Activated CD4-positive, alpha-beta T cell treated with anti-CD3 and anti-CD28 coated beads for 36 hours (primary cell): ENCODE measurements at regions of chr7 and their contacts with region 1.

Region 1: DNA sequence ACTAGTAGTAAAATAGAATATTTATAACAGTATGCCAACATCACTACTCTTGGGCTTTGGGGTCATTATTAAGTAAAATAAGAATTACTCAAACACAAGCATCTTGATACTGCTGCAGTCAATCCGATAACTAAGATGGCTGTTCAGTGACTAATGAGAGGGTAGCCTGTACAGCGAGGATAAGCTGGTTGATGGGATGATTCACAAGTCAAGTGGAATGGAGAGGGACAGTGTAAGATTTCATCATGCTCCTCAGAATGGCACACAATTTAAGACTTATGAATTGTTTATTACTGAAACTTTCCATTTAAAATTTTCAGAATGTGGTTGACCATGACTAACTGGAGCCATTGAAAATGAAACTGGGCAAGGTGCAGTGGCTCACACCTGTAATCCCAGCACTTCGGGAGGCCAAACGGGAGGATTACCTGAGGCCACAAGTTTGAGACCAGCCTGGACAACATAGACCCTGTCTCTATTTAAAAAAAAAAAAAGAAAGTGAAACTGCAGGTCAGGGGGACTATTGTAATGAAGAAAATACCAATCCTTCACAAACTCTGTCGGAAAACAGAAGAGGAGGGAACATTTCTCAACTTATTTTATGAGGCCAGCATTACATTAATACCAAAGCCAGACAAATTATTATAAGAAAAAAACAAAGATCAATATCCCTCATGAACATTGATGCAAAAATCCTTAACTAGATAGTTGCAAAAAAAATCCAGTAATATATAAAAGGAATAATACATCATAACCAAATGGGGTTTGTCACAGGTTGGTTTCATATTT is 11.2 kb downstream of the AVL9 start:
- DNase-seq: peak; percentile 54
- ATAC-seq: peak; percentile 88
- H3K4me3 Mint-ChIP-seq: peak overlapping the region; percentile 17
- H3K27ac Mint-ChIP-seq: peak overlapping the region; percentile 88
- H3K4me1 Mint-ChIP-seq: peaks cover 60% of the 10 kb centered on the region
- H3K27me3 Mint-ChIP-seq: no peaks in the 10 kb centered on the region

Region 2: DNA sequence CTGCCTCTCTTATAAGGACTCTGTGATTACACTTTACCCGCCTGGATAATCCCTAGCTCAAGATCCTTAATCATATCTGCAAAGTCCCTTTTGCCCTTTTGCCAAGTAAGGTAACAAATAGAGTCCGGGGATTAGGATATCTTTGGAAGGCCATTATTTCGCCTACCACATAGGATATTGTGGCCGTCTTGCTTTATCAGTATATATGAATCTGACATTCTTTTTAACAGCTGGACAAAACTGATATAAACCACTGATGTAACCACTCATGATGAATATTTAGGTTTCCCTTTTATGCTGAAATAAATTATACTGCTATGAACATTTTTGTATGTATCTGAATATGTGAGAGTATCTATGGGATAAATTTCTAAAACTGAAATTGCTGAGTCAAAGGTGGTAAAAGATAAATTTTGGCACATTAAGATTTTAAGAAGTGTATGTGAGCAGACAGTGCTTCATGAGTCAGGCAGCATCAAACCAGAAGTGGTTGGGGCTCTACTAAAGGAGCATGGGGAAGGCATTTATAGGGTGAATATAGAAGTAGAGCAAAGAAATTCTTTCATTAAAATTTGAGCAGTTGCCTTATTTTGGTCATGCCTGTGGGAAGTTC is 33.6 kb after region 1 on chr7:
- CTCF ChIA-PET with region 1: no interaction called
- POLR2A ChIA-PET with region 1: no interaction called
- intact Hi-C with region 1: loop called in 1 of 2 experiments (anchors 1 kb)
- DNase-seq: peak; percentile 10
- ATAC-seq: peak; percentile 91
- H3K4me3 Mint-ChIP-seq: no peak overlapping the region
- H3K27ac Mint-ChIP-seq: no peak overlapping the region
- H3K4me1 Mint-ChIP-seq: peaks cover 27% of the 10 kb centered on the region
- H3K27me3 Mint-ChIP-seq: no peaks in the 10 kb centered on the region

Region 3: DNA sequence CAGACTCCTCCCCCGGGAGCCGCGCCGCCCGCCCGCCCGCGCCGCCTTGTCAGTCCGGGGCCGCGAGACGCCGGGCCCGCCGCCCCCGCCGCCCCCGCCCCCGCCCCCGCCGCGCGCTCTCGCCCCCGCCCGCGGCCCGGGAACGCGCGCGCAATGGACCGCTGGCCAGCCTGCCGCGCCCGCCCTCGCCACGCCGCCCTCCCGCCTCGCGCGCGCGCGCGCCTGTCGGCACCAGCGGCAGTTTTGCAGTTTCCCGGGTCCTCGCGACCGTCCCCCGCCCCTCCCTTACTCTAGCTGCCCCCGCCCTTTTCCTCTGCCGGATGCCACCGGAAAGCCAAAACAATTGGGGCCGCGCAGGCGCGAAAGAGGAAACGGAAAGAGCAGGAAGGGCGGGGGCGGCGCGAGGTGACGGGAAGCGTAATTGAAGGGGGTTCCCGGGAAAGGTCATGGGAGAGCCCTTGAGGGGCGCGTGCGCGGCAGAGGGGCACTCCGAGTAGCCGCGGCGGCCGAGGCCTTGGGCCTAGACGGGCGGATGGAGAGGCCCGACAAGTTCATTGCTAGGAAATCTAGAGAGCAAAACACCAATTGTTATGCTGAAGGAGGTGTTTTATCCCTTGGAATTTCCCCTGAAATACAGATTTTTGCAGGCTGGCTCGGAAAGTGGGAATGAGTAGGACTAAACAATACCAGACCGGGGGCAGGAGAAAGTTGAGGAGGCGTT is 385.5 kb after region 1 on chr7:
- CTCF ChIA-PET with region 1: no interaction called
- POLR2A ChIA-PET with region 1: no interaction called
- intact Hi-C with region 1: no loop called
- DNase-seq: peak; percentile 99
- ATAC-seq: peak; percentile 67
- H3K4me3 Mint-ChIP-seq: peak overlapping the region; percentile 94
- H3K27ac Mint-ChIP-seq: peak overlapping the region; percentile 99
- H3K4me1 Mint-ChIP-seq: peaks cover 44% of the 10 kb centered on the region
- H3K27me3 Mint-ChIP-seq: no peaks in the 10 kb centered on the region